ENCODE measurements at regions of chr9 and their contacts with region 1.

Region 1: DNA sequence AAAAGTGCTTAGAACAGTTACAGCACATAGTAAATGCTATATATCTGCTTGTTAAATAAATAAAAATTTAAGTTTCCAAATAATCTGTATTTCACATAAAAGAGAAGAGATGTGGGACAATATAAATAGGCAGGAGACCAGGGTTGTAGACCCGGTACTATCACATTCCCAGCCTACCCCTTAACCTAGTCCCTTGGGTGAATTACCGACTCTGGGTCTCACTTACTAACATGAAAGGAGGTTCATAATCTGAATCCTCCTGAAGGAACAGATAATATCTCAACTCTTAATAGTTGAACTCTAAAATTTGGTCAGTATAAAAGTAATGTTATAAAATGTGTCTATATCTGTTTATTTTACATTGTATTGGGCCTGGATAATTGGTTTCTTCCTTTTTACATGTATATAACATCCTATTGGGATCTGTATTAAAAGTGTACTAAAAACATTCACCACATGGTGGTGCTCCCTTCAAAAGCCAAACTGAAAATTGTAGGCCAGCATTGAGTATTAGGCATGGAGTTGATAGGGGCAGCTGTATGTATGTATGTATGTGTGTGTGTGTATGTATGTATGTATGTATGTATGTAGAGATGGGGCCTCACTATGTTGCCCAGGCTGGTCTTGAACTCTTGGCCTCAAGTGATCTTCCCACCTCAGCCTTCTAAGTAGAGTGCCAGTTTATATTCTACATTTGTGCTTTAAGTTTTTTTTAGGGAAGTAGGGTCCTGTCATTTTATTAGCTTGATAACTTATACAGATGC is 64.2 kb upstream of the ABL1 start:
- DNase-seq: no peak
- ATAC-seq: peak; percentile 31

Region 2: DNA sequence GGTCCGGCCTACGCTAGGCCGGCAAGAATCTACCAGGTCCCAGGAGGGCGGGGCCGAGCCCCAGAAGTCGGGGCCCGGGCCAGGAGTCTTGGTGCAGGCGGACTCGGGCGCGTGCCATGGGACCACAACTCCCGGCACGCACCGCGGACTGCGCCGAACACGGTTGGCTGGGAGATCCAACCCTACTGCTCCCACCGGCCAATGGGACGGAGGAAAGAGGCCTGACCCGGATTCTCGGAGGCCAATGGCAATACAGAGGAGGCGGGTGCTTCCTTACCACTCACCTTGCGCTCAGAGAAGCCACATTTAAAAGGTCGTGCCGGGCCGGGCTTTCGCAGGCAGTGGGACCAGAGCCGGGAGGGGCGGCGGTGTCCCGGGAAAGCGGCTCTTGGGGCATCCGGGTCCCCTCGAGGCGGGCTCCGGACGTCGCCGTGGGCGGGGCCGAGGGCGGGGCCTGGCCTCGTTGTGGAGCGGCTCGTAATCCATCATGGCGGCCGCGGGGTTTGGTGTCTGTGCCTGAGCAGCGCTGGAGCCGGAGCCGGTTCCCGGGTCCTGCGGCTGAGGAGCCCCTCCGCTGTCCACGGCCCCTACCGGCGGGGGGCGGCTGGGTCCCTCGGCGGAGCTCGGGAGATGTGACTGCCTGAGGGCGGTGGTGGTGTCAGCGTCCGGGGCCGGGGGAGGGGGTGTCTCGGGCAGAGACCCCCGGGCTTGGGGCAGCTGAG is 58.1 kb before region 1 on chr9:
- intact Hi-C with region 1: loop called in 1 of 2 experiments (anchors 10 kb)
- DNase-seq: peak; percentile 97 to 99
- ATAC-seq: peak; percentile 90

Region 3: DNA sequence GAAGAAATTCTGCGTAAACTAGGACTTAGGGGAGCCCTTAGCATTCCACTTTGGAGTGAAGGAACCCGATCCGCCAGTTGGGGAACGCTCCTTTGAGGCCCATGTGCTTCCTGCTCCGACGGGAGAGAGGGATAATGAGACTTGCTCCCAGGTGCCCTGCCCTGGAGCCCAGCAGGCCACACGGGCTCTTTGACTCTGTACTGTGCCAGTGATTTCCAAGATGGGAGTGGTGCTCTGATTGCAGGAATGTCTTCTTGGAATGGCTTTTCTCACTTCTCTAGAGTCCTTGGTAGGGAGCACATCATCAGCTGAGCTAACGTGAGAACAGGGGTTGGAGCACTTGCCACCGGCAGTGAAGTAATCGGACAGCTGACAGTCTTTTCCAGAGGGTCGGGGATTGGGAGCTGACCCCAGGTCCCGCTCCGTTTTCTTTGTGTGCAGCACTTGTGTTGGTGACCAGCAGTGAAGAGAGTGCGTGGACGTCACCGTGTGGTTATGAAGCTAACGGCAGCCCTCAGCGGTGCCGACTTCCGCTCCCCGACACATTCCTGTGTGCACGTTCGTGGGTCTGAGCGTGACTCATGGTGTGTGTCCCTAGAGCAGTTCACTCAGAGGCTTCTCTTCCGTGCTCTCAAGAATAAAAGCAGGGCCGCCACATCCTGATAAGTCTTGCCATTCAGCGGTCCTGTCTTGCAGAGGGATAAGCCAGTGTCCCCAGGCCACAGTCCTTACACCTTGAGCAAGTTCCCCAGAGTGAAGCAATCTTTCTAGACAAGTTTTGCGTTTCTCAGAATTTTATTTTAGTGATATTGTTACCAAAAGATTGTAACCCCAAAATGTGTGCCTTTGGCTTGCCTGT is 89.8 kb after region 1 on chr9:
- intact Hi-C with region 1: loop called in 1 of 2 experiments (anchors 5 kb)
- DNase-seq: peak; percentile 54 to 73
- ATAC-seq: peak; percentile 28

Region 4: GRCh38 chr9:130940693-130941576 is 170.1 kb after region 1 on chr9:
- intact Hi-C with region 1: no loop called
- DNase-seq: peak; percentile 90 to 92
- ATAC-seq: peak; percentile 85